ENCODE measurements at regions of chr1 and their contacts with region 1.

Region 1: GRCh38 chr1:85224734-85225623 is 24.2 kb upstream of the SYDE2 start:
- DNase-seq: peak; percentile 38 to 60
- H3K4me3 ChIP-seq: peak overlapping the region in 2 of 4 experiments; percentile 1 to 5; a peak in 2 of 8 replicates
- H3K27ac ChIP-seq: 0 out of 2 replicates have a peak overlapping the region, but pooled peaks have one; percentile 2
- H3K4me1 ChIP-seq: peaks cover 0 to 15% (median 4%) of the 10 kb centered on the region in 4 experiments; a peak in 4 of 7 replicates
- H3K27me3 ChIP-seq: no peaks in the 10 kb centered on the region
- CTCF ChIP-seq: no peak
- EP300 ChIP-seq: peak in 1 of 2 experiments; percentile 68; a peak in 1 of 3 replicates
- POLR2A ChIP-seq: no peak
- RAD21 ChIP-seq: peak in 1 of 2 experiments; percentile 22; a peak in 1 of 4 replicates

Region 2: GRCh38 chr1:85240174-85240601 is 15.2 kb after region 1 on chr1:
- CTCF ChIA-PET with region 1: interaction called, 46 read pairs
- POLR2A ChIA-PET with region 1: interaction called, 5 read pairs
- DNase-seq: no peak
- H3K4me3 ChIP-seq: no peak overlapping the region
- H3K27ac ChIP-seq: no peak overlapping the region
- H3K4me1 ChIP-seq: peaks cover 0 to 1% (median 0%) of the 10 kb centered on the region in 4 experiments; a peak in 2 of 7 replicates
- H3K27me3 ChIP-seq: no peaks in the 10 kb centered on the region
- CTCF ChIP-seq: peak in 2 of 3 experiments; percentile 48 to 64; a peak in 3 of 4 replicates
- EP300 ChIP-seq: no peak
- POLR2A ChIP-seq: no peak
- RAD21 ChIP-seq: peak; percentile 79 to 85